AG04450 (cell line): ENCODE measurements at regions of chr12 and their contacts with region 1.

Region 1: DNA sequence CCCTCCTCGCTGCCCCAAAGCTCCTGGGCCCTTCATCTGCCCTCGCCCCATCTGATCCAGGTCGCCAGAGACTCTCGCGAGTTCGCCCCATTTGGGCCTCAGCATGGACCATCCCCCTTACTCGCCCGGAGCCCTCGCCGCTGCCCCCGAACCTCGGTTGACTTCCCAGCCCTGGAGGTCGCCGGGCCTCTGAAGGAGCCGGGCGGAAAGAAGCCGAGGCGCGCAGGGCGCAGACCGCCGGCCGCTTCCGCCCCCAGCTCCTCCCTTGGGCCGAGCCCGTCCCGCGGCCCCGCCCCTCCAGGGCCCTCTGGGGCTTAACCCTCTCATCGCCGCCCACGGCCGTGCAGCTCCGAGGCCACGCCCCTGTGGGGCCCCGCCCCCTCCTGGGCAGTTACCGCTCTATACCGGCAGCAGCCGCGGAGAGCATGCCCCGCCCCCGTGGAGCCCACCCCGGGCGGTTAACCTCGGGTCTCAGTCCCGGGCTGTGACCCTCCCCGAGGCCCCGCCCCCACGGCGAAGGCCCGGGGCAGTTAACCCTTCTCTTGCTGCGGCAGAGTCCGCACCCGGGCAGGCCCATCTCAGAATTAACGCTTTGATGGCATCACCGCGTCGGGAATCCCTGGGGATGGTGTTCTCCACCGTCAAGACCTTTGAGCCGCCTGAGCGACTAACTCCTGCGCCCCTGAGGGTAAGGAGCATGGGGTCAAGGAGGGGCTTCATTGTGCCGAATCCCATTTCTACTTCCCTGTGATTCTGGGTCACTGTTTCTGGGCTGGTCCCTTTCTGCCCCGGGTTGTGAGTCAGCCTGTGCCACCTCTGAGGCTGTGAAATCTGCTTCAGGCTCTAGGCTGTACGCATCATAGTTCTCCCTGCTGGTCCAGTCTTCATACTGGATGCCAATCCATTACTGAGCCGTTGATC is at the start of gene SPSB2:
- DNase-seq: peak; percentile 79
- H3K4me3 ChIP-seq: peak within 1 kb of the TSS; percentile 84
- H3K27ac ChIP-seq: peak within 1 kb of the TSS; percentile 81
- H3K27me3 ChIP-seq: no peaks in the 10 kb centered on the region
- CTCF ChIP-seq: no peak
- polyA plus RNA-seq, gene SPSB2: 2.6 and 3.7 TPM in 2 replicates

Region 2: GRCh38 chr12:6799147-6799546 is 74.2 kb before region 1 on chr12:
- CTCF ChIA-PET with region 1: no interaction called
- POLR2A ChIA-PET with region 1: no interaction called
- DNase-seq: no peak
- H3K4me3 ChIP-seq: no peak overlapping the region
- H3K27ac ChIP-seq: no peak overlapping the region
- H3K27me3 ChIP-seq: peaks cover 4% of the 10 kb centered on the region
- CTCF ChIP-seq: no peak

Region 3: GRCh38 chr12:6851921-6852650 is 21.3 kb before region 1 on chr12 and contains the start of gene USP5:
- CTCF ChIA-PET with region 1: interaction called, 26 read pairs
- POLR2A ChIA-PET with region 1: interaction called, 57 read pairs
- DNase-seq: peak; percentile 99
- H3K4me3 ChIP-seq: peak within 1 kb of the TSS; percentile 97
- H3K27ac ChIP-seq: peak within 1 kb of the TSS; percentile 92
- H3K27me3 ChIP-seq: no peaks in the 10 kb centered on the region
- CTCF ChIP-seq: no peak; the same call in 1 of the 2 replicates
- polyA plus RNA-seq, gene USP5: 47.1 and 54.8 TPM in 2 replicates

Region 4: GRCh38 chr12:6883683-6884082 is 10.3 kb after region 1 on chr12:
- CTCF ChIA-PET with region 1: interaction called, 29 read pairs
- POLR2A ChIA-PET with region 1: interaction called, 9 read pairs
- DNase-seq: no peak
- H3K4me3 ChIP-seq: no peak overlapping the region
- H3K27ac ChIP-seq: no peak overlapping the region
- H3K27me3 ChIP-seq: no peaks in the 10 kb centered on the region
- CTCF ChIP-seq: no peak

Region 5: GRCh38 chr12:6890789-6891645 is 17.7 kb after region 1 on chr12:
- CTCF ChIA-PET with region 1: interaction called, 50 read pairs
- POLR2A ChIA-PET with region 1: interaction called, 35 read pairs
- DNase-seq: peak; percentile 91
- H3K4me3 ChIP-seq: peak overlapping the region; percentile 59
- H3K27ac ChIP-seq: peak overlapping the region; percentile 94
- H3K27me3 ChIP-seq: no peaks in the 10 kb centered on the region
- CTCF ChIP-seq: peak; percentile 70

Region 6: DNA sequence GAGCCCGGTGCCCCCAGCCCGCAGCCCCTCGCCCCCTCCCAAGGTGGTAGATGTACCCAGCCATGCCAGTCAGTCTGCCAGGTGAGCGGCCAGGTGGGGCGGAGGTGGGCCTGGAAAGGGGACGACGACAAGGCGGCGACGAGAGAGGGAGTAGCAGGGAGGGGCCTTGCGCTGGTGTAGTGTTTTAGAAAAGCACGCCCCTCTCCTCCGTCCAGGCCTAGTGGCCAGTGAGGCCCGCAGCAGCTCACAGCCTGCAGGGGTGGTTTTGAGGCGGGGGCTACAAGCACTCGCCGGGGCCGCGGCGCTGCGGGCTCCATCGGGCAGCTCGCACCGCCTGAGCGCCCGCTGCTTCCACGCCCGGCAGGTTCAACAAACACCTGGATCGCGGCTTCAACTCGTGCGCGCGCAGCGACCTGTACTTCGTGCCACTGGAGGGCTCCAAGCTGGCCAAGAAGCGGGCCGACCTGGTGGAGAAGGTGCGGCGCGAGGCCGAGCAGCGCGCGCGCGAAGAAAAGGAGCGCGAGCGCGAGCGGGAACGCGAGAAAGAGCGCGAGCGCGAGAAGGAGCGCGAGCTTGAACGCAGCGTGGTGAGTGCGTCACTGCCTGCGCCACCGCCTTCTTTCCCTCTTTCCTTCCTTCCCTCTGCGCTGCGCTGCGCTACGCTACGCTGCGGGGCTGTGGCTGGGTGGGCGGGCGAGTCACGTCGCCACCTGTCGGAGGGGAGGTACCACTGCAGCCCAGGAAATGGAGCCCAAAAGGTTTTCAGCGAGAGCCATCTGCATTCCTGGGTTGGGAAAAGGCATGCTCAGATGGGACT is 64.3 kb after region 1 on chr12:
- CTCF ChIA-PET with region 1: interaction called, 11 read pairs
- POLR2A ChIA-PET with region 1: interaction called, 14 read pairs
- DNase-seq: peak; percentile 84
- H3K4me3 ChIP-seq: peak overlapping the region; percentile 61
- H3K27ac ChIP-seq: peak overlapping the region; percentile 61
- H3K27me3 ChIP-seq: no peaks in the 10 kb centered on the region
- CTCF ChIP-seq: peak; percentile 93

Region 7: GRCh38 chr12:6944381-6945186 is 71.2 kb after region 1 on chr12:
- CTCF ChIA-PET with region 1: interaction called, 11 read pairs
- POLR2A ChIA-PET with region 1: interaction called, 14 read pairs
- DNase-seq: peak; percentile 88
- H3K4me3 ChIP-seq: peak overlapping the region; percentile 79
- H3K27ac ChIP-seq: peak overlapping the region; percentile 94
- H3K27me3 ChIP-seq: no peaks in the 10 kb centered on the region
- CTCF ChIP-seq: peak; percentile 83

Region 8: DNA sequence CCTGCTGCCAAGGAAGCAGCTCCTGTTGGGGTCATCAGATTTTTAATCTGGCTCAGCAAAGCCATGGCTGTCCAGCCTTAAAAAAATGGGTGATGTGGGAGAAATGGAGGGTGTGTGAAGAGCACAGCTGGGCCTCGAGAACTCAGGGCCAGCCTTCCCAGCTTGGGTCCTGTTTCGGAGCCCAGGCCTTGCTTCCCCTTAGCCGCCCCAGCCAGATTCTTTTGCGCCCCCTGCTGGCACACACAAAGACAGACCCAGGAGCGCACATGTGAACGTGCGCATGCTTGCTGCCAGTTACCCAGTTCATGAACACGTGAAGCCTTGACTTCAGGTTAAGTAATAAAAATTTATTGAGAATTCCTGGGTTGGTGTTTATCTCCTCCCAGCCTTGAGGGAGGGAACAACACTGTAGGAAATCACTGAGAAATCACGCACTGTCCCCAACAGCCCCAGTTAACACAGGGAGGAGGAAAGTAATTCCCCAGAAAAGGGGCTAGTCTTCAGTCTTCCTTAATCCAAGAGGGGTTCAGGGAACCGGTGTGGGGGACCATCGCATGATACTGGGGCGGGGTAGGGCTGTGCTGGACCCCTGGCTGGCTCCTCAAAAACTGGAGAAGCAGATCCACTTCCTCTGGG is 91.8 kb after region 1 on chr12:
- CTCF ChIA-PET with region 1: interaction called, 14 read pairs
- POLR2A ChIA-PET with region 1: no interaction called
- DNase-seq: peak; percentile 79
- H3K4me3 ChIP-seq: no peak overlapping the region
- H3K27ac ChIP-seq: peak overlapping the region; percentile 68
- H3K27me3 ChIP-seq: no peaks in the 10 kb centered on the region
- CTCF ChIP-seq: peak; percentile 85

Region 9: DNA sequence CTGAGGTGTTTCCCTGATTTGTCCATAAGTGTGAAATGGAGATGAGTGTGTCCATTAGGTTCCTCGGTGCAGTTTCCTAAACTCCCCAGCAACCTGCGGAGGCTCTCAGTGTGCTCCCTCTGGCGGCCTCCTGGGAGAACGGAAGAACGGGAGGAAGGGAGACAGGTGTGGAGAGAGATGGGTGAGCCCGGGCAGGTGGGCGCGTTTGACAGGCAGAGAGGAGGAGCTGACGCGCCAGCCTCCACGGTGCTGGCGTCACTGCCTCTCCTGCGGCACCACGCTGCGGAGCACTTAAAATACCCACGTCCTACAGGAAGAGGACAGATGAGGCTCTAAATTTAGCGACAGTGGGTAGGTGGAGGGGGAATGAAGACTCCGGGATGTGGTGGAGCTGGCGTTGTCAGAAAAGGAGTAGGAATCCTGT is 289.3 kb after region 1 on chr12:
- CTCF ChIA-PET with region 1: no interaction called
- POLR2A ChIA-PET with region 1: no interaction called
- DNase-seq: no peak
- H3K4me3 ChIP-seq: no peak overlapping the region
- H3K27ac ChIP-seq: no peak overlapping the region
- H3K27me3 ChIP-seq: peaks cover 22% of the 10 kb centered on the region
- CTCF ChIP-seq: peak; percentile 54